Activated T-helper 1 cell treated with anti-CD3 and anti-CD28 coated beads, Interleukin-12 subunit alpha, Interleukin-12 subunit beta, Interleukin-2, Interleukin-4 antibody, amounts not matched to agents 30 ng/mL and 10 ng/mL and 1 ng/mL, durations not matched to agents 14 hours and 24 hours and 36 hours (primary cell): ENCODE measurements at regions of chr3 and their contacts with region 1.

Region 1: GRCh38 chr3:60192297-60193114 is 1058.7 kb downstream of the FHIT start:
- DNase-seq: no peak
- H3K4me3 Mint-ChIP-seq: peak overlapping the region; percentile 62
- H3K27ac Mint-ChIP-seq: peak overlapping the region; percentile 94
- H3K4me1 Mint-ChIP-seq: peaks cover 58% of the 10 kb centered on the region
- H3K27me3 Mint-ChIP-seq: no peaks in the 10 kb centered on the region

Region 2: DNA sequence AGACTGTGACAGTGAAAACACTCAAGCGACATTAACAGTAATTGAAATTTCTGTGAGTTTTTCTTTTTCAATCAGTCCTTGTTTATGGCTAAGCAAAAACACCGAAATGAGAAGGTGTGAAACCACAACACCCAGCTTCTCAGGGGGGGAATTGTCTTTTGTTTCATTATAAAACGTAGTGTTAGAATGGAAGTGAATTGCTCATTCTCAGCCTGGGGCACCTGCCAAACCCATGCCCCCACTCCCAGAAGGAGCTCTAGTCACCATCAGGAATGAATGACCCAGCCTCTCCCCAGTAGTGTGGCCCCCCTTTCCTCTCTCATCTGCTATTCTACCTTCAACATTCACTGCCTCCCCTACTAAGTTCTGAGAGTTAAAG is 956.9 kb before region 1 on chr3:
- intact Hi-C with region 1: loop called (anchors 5 kb)
- DNase-seq: peak; percentile 37
- H3K4me3 Mint-ChIP-seq: peak overlapping the region; percentile 58
- H3K27ac Mint-ChIP-seq: peak overlapping the region; percentile 27
- H3K4me1 Mint-ChIP-seq: peaks cover 29% of the 10 kb centered on the region
- H3K27me3 Mint-ChIP-seq: peaks cover 6% of the 10 kb centered on the region

Region 3: DNA sequence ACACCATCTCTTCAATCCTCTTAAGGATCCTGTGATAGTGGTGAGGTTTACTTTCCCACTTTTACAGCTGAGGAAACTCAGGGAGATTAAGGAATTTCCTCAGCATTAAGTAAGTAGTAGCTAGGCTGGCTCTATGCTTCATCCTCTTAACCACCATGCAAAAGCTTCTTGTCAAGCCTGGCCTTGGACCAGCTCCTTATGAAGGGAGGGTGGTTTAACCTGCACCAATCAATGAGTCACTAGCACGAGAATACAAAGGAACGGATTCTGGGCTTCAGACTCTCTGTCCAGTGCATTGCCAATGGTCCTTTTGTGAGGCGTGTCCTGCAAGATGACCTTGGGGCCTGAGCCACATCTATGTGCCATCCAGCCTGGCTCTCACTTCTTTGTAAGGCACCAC is 940.6 kb before region 1 on chr3:
- intact Hi-C with region 1: no loop called
- DNase-seq: no peak
- H3K4me3 Mint-ChIP-seq: no peak overlapping the region
- H3K27ac Mint-ChIP-seq: no peak overlapping the region
- H3K4me1 Mint-ChIP-seq: peaks cover 9% of the 10 kb centered on the region
- H3K27me3 Mint-ChIP-seq: peaks cover 2% of the 10 kb centered on the region

Region 4: GRCh38 chr3:59866076-59866475 is 326.4 kb before region 1 on chr3:
- intact Hi-C with region 1: loop called (anchors 2 kb)
- DNase-seq: no peak
- H3K4me3 Mint-ChIP-seq: no peak overlapping the region
- H3K27ac Mint-ChIP-seq: no peak overlapping the region
- H3K4me1 Mint-ChIP-seq: peaks cover 40% of the 10 kb centered on the region
- H3K27me3 Mint-ChIP-seq: no peaks in the 10 kb centered on the region

Region 5: DNA sequence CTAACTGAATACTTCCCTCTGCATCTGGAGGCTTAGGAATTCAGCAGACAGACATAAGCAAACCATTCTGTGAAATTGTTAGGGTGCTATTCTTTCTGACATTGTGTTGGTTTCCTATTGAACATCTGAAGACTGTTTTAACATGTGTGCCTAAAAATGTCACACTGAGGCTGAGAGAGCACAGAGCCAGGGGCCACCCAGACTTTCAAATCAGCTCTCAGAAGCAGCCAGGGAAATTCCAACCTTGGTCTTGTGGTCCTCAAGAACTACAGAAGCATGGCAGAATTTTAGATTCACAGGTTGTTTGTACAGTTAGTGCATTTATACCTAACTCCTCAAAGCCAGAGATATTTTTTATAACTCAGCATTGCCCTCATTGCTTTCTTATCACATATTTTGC is 213.5 kb before region 1 on chr3:
- intact Hi-C with region 1: loop called (anchors 1 kb)
- DNase-seq: peak; percentile 38
- H3K4me3 Mint-ChIP-seq: peak overlapping the region; percentile 64
- H3K27ac Mint-ChIP-seq: peak overlapping the region; percentile 93
- H3K4me1 Mint-ChIP-seq: peaks cover 45% of the 10 kb centered on the region
- H3K27me3 Mint-ChIP-seq: no peaks in the 10 kb centered on the region

Region 6: GRCh38 chr3:60048447-60048848 is 144.1 kb before region 1 on chr3:
- intact Hi-C with region 1: loop called (anchors 1 kb)
- DNase-seq: peak; percentile 62
- H3K4me3 Mint-ChIP-seq: peak overlapping the region; percentile 74
- H3K27ac Mint-ChIP-seq: peak overlapping the region; percentile 93
- H3K4me1 Mint-ChIP-seq: peaks cover 88% of the 10 kb centered on the region
- H3K27me3 Mint-ChIP-seq: no peaks in the 10 kb centered on the region

Region 7: DNA sequence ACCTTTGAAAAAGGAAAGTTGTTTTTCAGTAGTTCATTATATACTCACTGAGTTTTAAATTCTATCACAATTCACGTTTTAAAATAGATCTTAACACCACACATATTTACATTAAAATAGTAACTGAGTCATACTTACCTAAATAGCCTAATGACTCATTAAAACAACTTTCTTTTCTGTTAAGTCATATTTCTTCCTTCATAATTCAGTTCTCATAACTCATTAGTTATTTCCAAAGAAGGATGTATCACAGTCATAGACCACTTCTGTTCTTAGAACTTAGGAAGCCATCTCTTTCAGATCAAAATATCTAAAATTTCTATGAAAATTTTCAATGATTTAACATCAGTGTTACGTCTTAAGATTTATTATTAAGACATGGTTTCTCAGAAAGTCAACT is 172.9 kb after region 1 on chr3:
- intact Hi-C with region 1: loop called (anchors 1 kb)
- DNase-seq: no peak
- H3K4me3 Mint-ChIP-seq: no peak overlapping the region
- H3K27ac Mint-ChIP-seq: peak overlapping the region; percentile 46
- H3K4me1 Mint-ChIP-seq: peaks cover 27% of the 10 kb centered on the region
- H3K27me3 Mint-ChIP-seq: no peaks in the 10 kb centered on the region

Region 8: GRCh38 chr3:61251174-61251972 is 1058.9 kb after region 1 on chr3 and contains the start of gene FHIT:
- intact Hi-C with region 1: loop called (anchors 2 kb)
- DNase-seq: peak; percentile 90
- H3K4me3 Mint-ChIP-seq: peak within 1 kb of the TSS; percentile 96
- H3K27ac Mint-ChIP-seq: peak within 1 kb of the TSS; percentile 94
- H3K4me1 Mint-ChIP-seq: peaks cover 30% of the 10 kb centered on the region
- H3K27me3 Mint-ChIP-seq: peaks cover 12% of the 10 kb centered on the region
- total RNA-seq, gene FHIT: 19.9 and 22.6 TPM in 2 replicates